ENCODE measurements at regions of chr11 and their contacts with region 1.

Region 1: GRCh38 chr11:45736424-45736823 is 68.5 kb upstream of the SLC35C1 start:
- DNase-seq: peak; percentile 95
- H3K4me3 ChIP-seq: peak overlapping the region in 1 of 3 experiments; percentile 1
- H3K27ac ChIP-seq: peak overlapping the region; percentile 98
- H3K4me1 ChIP-seq: peaks cover 21% of the 10 kb centered on the region
- H3K27me3 ChIP-seq: no peaks in the 10 kb centered on the region
- CTCF ChIP-seq: no peak

Region 2: DNA sequence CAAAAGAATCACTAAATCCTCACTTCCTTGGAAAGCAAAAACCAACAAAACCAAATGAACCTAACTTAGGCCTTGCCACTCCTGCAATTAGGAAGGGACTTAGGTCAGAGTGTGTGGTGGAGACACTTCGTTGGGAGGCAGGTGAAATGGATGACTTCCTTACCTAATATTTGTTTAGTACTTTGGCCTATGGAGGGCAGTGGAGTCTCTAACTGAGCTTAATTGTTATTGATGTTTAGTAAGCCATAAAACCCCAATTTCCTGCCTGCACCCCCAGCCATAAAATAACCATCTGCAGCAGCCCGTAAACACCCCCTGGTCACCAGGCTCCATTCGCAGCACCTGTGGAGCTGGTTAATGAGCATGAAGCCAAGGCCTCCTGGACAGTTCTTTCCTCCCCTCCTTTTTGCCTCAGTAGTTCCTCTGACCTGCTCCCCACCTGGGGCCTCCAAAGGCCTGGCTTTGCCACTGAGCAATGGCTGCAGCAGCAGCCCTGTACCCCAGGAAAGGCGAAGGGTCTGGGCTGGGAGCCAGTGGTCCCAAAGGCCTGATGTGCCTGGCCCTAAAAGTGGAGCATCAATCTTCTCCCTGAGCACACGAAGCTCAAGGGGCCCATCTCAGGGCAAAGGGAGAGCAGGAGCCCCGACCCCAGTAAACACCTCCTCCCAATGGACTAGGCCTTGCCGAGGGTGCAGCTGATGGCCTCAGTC is 434.7 kb before region 1 on chr11:
- CTCF ChIA-PET with region 1: interaction called, 12 read pairs
- dilution Hi-C with region 1: no loop called
- in situ Hi-C with region 1: no loop called
- intact Hi-C with region 1: no loop called
- DNase-seq: no peak
- H3K4me3 ChIP-seq: no peak overlapping the region
- H3K27ac ChIP-seq: no peak overlapping the region
- H3K4me1 ChIP-seq: no peaks in the 10 kb centered on the region
- H3K27me3 ChIP-seq: peaks cover 1% of the 10 kb centered on the region
- CTCF ChIP-seq: no peak

Region 3: GRCh38 chr11:45692808-45693453 is 43.5 kb before region 1 on chr11:
- CTCF ChIA-PET with region 1: no interaction called
- dilution Hi-C with region 1: no loop called
- in situ Hi-C with region 1: no loop called
- intact Hi-C with region 1: no loop called
- DNase-seq: no peak
- H3K4me3 ChIP-seq: no peak overlapping the region
- H3K27ac ChIP-seq: no peak overlapping the region
- H3K4me1 ChIP-seq: no peaks in the 10 kb centered on the region
- H3K27me3 ChIP-seq: no peaks in the 10 kb centered on the region
- CTCF ChIP-seq: no peak

Region 4: GRCh38 chr11:45804761-45805304 is 68.4 kb after region 1 on chr11 and contains the start of gene SLC35C1:
- CTCF ChIA-PET with region 1: no interaction called
- dilution Hi-C with region 1: no loop called
- in situ Hi-C with region 1: no loop called
- intact Hi-C with region 1: loop called (anchors 2 kb)
- DNase-seq: peak; percentile 91
- H3K4me3 ChIP-seq: peak within 1 kb of the TSS; percentile 74 to 91 (median 85)
- H3K27ac ChIP-seq: peak within 1 kb of the TSS; percentile 43
- H3K4me1 ChIP-seq: peaks cover 15% of the 10 kb centered on the region
- H3K27me3 ChIP-seq: no peaks in the 10 kb centered on the region
- CTCF ChIP-seq: peak in 1 of 2 donors; percentile 23
- total RNA-seq, gene SLC35C1: 11.2 to 18.0 TPM